ENCODE measurements at regions of chr6 and their contacts with region 1.

Region 1: GRCh38 chr6:152124429-152125074 is 317.1 kb downstream of the ESR1 start:
- DNase-seq: no peak

Region 2: DNA sequence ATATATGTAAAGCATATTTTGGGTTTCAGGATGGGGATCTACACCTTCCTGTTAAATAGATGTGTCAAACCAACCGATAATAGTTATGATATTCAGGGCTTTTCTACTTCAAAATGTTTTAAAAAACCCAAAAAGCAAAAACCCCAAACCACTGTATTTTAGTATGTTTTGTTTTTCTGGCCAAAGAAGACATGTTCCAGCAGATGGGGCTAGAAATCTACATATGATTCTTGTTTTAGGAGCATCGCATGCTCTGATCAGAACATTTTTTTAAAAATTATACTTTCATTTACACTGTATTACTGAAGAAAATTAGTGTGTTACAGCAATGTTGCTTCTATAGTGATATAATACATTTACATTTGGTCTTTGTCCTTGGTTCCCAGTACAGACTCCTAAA is 683.6 kb before region 1 on chr6:
- intact Hi-C with region 1: loop called (anchors 10 kb)
- DNase-seq: no peak

Region 3: GRCh38 chr6:151690768-151691562 is 433.6 kb before region 1 on chr6:
- intact Hi-C with region 1: loop called (anchors 10 kb)
- DNase-seq: no peak

Region 4: DNA sequence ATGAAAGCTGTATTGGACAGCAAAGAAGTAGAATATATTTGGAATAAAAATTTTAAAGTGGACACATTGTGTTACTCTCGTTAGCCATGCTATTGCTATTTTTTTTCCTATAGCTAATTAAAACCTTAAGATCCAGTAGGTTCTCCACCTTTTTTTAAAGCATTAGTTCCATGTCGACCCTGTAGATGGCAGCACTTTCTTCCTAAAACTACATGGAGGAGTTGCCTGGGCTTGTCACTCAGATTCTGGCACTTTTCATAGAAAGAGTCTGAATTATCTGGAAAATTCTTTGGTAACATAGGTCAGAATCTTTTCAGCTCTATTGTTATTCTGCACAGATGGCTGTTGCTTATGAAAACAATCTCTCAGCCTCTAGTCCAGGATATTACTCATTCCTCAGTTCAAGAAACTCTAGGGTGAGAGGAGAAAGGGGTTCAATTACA is 359.1 kb before region 1 on chr6:
- intact Hi-C with region 1: loop called (anchors 1 kb)
- DNase-seq: peak in 1 of 10 donors; percentile 27

Measured in posterior cingulate gyrus (tissue), 11 donors.